PC-9 (cell line): ENCODE measurements at regions of chr19 and their contacts with region 1.

Region 1: DNA sequence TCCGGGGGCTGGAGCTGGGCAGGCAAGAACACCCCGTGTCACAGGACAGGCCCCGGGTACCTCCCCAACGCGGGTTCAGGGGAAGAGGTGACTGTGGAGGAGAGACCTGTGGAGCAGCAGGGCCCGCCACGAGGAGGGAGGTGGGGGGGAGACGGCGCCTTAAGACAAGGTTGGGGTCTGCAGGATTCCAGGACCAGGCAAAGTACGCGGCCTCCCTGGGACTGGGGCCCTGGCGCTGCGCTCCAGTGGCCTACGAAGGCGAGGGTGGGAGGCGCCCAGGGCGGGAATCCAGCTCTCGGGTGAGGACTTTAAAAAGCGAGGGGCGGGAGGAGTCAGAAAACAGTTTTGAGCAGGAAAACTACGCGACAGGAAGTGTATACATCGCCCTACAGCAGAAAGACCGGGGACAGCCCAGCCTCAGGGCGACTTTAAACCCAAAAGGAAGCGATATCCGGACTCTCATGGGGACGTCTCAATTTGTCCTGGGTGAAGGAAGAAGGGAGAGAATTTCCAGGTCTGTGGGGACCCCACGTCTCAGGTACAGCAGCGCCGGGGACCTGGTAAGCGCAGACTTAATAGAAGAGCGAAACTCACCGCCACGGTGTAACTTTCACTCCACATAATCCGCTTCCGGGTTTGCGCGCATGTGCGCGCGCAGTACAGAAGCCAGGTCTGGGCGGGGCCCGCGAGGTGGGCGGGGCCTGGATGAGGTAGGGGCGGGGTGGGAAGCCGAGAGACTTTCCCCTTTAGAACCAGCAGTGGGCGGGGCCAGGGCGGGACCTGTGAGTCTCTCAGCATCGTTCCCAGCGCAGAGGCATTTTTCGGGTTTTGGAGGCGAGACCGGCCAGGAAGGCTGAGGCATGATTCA is at the start of gene ZNF83:
- DNase-seq: peak; percentile 82 to 94
- H3K4me3 ChIP-seq: peak within 1 kb of the TSS; percentile 77
- H3K27ac ChIP-seq: peak within 1 kb of the TSS; percentile 90
- H3K4me1 ChIP-seq: peaks cover 17% of the 10 kb centered on the region
- H3K27me3 ChIP-seq: no peaks in the 10 kb centered on the region
- CTCF ChIP-seq: no peak
- total RNA-seq, gene ZNF83: 54.6 and 60.6 TPM in 2 replicates

Region 2: DNA sequence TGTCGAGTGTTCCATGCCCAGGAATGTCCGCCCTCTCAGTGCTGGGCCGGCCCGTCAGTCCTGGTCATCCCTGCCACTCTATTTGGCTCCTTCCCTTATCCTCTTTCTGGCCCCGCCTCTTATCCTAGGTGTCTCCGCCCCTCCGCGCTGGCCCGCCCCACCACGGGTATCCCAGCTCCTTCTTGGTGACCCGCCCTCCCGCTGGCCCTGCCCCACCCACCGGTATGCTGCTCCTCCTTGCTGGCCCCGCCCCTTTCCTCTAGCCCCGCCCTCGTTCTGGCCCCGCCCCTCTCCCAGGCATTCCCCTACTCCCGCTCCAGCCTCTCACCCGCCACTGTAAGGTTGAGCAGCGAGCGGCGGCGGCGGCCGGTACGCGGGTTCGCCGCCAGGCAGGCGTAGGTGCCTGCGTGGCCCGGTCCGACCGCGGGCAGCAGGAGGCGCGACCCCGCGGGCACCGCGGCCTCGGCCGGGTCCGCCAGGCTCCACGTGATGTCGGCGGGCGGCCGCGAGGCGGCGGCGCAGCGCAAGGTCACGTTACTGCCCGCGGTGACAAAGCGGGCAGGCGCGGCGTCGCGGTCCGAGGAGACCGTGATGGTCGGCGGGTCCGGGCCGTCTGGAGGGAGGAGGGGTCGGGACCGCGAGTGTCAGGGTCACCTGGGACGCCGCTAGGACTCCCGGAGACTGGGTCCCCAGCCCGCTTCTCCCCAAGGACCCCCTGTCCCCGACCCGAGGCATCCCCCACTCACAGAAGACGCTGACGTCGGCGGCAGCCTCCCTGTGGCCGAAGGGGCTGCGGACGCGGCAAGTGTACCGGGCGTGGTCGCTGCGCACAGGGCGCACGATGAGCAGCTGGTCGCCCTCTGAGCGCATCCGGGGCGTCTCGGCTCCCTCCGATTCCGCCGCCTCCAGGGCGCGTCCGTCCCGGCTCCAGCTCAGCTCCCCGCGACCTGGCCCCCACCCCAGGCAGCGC is 1298.0 kb before region 1 on chr19:
- CTCF ChIA-PET with region 1: no interaction called
- POLR2A ChIA-PET with region 1: no interaction called
- intact Hi-C with region 1: no loop called
- DNase-seq: peak; percentile 90 to 98
- H3K4me3 ChIP-seq: peak overlapping the region; percentile 84
- H3K27ac ChIP-seq: no peak overlapping the region
- H3K4me1 ChIP-seq: peaks cover 21% of the 10 kb centered on the region
- H3K27me3 ChIP-seq: no peaks in the 10 kb centered on the region
- CTCF ChIP-seq: no peak

Region 3: GRCh38 chr19:52734893-52735661 is 97.1 kb after region 1 on chr19 and contains the start of gene ZNF611:
- CTCF ChIA-PET with region 1: no interaction called
- POLR2A ChIA-PET with region 1: interaction called, 5 read pairs
- intact Hi-C with region 1: loop called (anchors 5 kb)
- DNase-seq: peak; percentile 85 to 99
- H3K4me3 ChIP-seq: peak within 1 kb of the TSS; percentile 79
- H3K27ac ChIP-seq: peak within 1 kb of the TSS; percentile 55
- H3K4me1 ChIP-seq: no peaks in the 10 kb centered on the region; the same call in 1 of the 2 replicates
- H3K27me3 ChIP-seq: no peaks in the 10 kb centered on the region
- CTCF ChIP-seq: peak; percentile 74
- total RNA-seq, gene ZNF611: 25.5 and 26.2 TPM in 2 replicates